Pancreas (tissue), 10 donors: ENCODE measurements at regions of chr11 and their contacts with region 1.

Region 1: DNA sequence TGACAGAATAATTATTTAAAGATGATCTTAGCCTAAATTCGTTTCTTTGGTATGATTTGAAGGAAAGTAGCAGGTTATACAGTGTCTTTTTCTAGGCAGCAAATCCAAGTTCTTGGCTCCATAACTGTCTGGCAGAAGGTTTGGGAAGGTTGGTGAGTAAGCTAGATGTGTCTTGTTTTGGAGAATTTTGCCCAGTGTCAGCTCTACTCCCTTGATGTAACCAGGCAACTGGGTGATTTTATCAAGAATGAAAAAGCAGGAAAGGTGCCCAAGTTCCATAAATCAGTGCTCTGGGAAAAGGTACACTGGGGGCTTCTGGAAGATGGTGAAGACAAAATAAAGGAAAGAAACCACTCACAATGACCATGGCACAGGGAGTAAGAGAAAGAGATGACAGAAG is 71.5 kb upstream of the USP47 start:
- DNase-seq: no peak
- ATAC-seq: no peak
- H3K4me3 ChIP-seq: no peak overlapping the region
- H3K27ac ChIP-seq: no peak overlapping the region
- H3K4me1 ChIP-seq: no peaks in the 10 kb centered on the region
- H3K27me3 ChIP-seq: no peaks in the 10 kb centered on the region
- CTCF ChIP-seq: no peak

Region 2: DNA sequence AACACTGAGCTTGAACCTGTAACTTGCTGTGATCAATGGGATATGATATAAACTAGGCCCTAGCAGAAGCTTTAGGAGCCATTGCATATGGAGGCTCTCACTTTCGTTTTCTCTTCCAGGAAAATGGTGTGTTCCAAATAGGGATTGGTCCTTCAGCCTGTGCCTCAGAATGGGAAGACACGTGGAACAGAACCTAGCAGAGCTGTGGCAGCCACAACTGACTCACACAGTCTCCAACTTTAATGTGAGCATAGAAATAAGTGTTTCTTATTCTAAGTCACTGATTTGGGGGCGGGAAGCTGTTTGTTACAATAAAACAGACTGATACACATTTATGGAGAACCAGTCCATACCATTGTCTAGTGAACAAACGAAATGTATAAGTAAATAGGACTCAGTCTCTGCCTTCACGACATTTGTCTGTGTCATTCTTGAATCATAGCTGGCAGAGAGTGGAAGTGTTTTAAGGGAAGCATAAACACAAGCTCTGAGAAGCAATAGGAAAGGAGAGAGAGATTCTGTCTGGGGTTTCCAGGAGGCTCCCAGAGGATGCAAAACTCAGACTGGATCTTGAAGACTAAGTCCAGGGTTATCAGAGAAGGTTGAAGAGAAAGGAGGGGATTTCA is 245.7 kb before region 1 on chr11:
- intact Hi-C with region 1: loop called in 1 of 3 experiments (anchors 5 kb)
- DNase-seq: no peak
- ATAC-seq: no peak
- H3K4me3 ChIP-seq: no peak overlapping the region
- H3K27ac ChIP-seq: no peak overlapping the region
- H3K4me1 ChIP-seq: no peaks in the 10 kb centered on the region
- H3K27me3 ChIP-seq: no peaks in the 10 kb centered on the region
- CTCF ChIP-seq: no peak